Right cardiac atrium (tissue), 5 donors: ENCODE measurements at regions of chr5 and their contacts with region 1.

Region 1: GRCh38 chr5:69224520-69224919 is 10.2 kb upstream of the CDK7 start:
- DNase-seq: no peak
- ATAC-seq: no peak
- H3K4me3 ChIP-seq: no peak overlapping the region
- H3K27ac ChIP-seq: no peak overlapping the region
- H3K4me1 ChIP-seq: no peaks in the 10 kb centered on the region
- H3K27me3 ChIP-seq: no peaks in the 10 kb centered on the region

Region 2: GRCh38 chr5:69032009-69032408 is 192.5 kb before region 1 on chr5:
- intact Hi-C with region 1: no loop called
- DNase-seq: no peak
- ATAC-seq: no peak
- H3K4me3 ChIP-seq: no peak overlapping the region
- H3K27ac ChIP-seq: no peak overlapping the region
- H3K4me1 ChIP-seq: no peaks in the 10 kb centered on the region
- H3K27me3 ChIP-seq: no peaks in the 10 kb centered on the region

Region 3: GRCh38 chr5:69083412-69083811 is 141.1 kb before region 1 on chr5:
- intact Hi-C with region 1: no loop called
- DNase-seq: no peak
- ATAC-seq: peak in 1 of 2 donors; percentile 19
- H3K4me3 ChIP-seq: no peak overlapping the region
- H3K27ac ChIP-seq: no peak overlapping the region
- H3K4me1 ChIP-seq: no peaks in the 10 kb centered on the region
- H3K27me3 ChIP-seq: no peaks in the 10 kb centered on the region

Region 4: DNA sequence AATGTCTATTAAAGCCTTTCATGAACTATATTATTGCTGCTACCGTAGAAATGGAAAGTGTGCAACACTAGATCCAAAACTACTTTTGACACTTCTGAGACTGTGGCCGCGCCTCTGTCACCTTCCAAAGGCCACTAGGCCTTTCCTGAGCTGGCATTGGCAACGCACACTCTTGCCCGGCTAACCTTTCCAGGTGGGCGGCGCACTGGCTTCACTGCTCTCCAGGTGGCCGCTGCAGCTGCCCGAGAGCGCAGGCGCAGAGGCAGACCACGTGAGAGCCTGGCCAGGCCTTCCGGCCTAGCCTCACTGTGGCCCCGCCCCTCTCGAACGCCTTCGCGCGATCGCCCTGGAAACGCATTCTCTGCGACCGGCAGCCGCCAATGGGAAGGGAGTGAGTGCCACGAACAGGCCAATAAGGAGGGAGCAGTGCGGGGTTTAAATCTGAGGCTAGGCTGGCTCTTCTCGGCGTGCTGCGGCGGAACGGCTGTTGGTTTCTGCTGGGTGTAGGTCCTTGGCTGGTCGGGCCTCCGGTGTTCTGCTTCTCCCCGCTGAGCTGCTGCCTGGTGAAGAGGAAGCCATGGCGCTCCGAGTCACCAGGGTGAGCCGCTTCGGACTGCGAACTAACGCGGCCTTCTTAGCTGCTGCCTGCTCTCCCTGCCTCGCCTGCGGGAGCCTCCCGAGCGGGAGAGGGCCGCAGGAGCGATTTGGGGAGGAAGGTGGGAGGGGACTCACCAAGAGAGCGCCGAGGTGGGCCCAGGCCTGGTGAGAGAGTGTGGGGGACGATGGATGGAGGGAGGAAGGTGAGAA is 57.6 kb before region 1 on chr5 and contains the start of gene CCNB1:
- intact Hi-C with region 1: loop called in 1 of 4 experiments (anchors 10 kb)
- DNase-seq: peak; percentile 98 to 99 (median 99)
- ATAC-seq: peak; percentile 100
- H3K4me3 ChIP-seq: peak within 1 kb of the TSS; percentile 69
- H3K27ac ChIP-seq: peak within 1 kb of the TSS; percentile 47
- H3K4me1 ChIP-seq: no peaks in the 10 kb centered on the region
- H3K27me3 ChIP-seq: no peaks in the 10 kb centered on the region
- total RNA-seq, gene CCNB1: 1.4 to 6.4 (median 3.8) TPM

Region 5: GRCh38 chr5:69276422-69277174 is 52.1 kb after region 1 on chr5:
- intact Hi-C with region 1: no loop called
- DNase-seq: no peak
- ATAC-seq: no peak
- H3K4me3 ChIP-seq: no peak overlapping the region
- H3K27ac ChIP-seq: no peak overlapping the region
- H3K4me1 ChIP-seq: no peaks in the 10 kb centered on the region
- H3K27me3 ChIP-seq: no peaks in the 10 kb centered on the region

Region 6: GRCh38 chr5:69331528-69332445 is 107.3 kb after region 1 on chr5:
- intact Hi-C with region 1: no loop called
- DNase-seq: no peak
- ATAC-seq: no peak
- H3K4me3 ChIP-seq: peak overlapping the region; percentile 38
- H3K27ac ChIP-seq: no peak overlapping the region
- H3K4me1 ChIP-seq: no peaks in the 10 kb centered on the region
- H3K27me3 ChIP-seq: no peaks in the 10 kb centered on the region